ENCODE measurements at regions of chr16 and their contacts with region 1.

Region 1: GRCh38 chr16:27235055-27235937 is 32.0 kb downstream of the KDM8 start:
- DNase-seq: peak; percentile 40 to 68
- ATAC-seq: peak; percentile 82 to 91; a peak in 5 of 6 replicates
- H3K4me3 ChIP-seq: no peak overlapping the region
- H3K27ac ChIP-seq: peak overlapping the region; percentile 3 to 61; a peak in 3 of 6 replicates
- H3K4me1 ChIP-seq: peaks cover 11% of the 10 kb centered on the region
- CTCF ChIP-seq: peak; percentile 87
- EP300 ChIP-seq: no peak
- POLR2A ChIP-seq: no peak
- RAD21 ChIP-seq: peak; percentile 85 to 88

Region 2: DNA sequence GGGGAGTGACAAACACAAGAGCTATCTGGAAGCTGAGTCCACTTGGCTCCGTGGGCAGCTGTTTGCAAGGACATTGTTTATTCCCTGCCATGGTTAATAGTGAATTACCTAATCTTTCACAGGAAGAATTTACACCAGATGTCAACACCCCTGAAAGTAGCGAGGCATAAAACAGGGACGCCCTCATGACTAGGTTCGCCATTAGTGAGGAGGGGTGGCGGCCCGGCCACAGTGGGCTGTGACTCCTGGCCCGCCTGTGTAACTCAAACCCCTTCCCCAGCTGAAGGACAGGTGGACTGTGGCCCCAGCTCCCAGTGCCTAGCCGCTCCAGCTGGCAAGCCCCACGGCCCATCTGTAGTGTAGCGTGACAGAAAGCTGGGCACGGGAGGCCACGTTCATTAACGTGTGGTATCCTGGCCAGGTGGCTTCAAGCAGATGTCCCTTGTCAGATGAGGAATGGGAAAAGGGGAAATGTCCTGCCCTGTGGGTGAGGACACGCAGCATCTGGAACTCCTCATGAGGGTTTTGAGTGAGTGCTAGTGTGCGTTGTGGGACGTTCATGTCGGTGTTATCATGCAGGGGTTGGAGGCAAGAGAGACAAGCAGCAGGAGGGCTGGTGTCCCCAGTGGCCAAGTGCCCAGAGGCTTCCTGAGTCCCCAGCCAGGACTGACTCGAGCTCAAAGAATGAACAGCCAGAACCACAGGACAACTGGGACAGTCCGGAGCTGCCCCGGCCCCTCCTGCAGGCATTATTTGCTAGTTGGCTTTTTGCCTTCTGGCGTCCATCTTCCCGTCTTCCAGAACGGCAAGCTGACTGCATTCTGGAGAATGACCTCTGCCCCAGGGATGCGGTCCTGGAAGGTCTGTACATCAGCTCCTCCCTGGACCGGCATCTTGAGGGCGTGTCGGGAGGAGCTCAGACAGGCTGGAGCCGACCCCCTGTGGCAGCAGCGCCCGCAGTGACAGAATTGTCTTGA is 12.8 kb before region 1 on chr16:
- CTCF ChIA-PET with region 1: interaction called, 72 read pairs
- POLR2A ChIA-PET with region 1: no interaction called
- DNase-seq: no peak
- ATAC-seq: peak in 1 of 2 experiments; percentile 24; a peak in 3 of 6 replicates
- H3K4me3 ChIP-seq: no peak overlapping the region
- H3K27ac ChIP-seq: no peak overlapping the region
- H3K4me1 ChIP-seq: peaks cover 6% of the 10 kb centered on the region; the same call in 2 of the 3 replicates
- CTCF ChIP-seq: no peak
- EP300 ChIP-seq: no peak
- POLR2A ChIP-seq: no peak
- RAD21 ChIP-seq: no peak

Region 3: DNA sequence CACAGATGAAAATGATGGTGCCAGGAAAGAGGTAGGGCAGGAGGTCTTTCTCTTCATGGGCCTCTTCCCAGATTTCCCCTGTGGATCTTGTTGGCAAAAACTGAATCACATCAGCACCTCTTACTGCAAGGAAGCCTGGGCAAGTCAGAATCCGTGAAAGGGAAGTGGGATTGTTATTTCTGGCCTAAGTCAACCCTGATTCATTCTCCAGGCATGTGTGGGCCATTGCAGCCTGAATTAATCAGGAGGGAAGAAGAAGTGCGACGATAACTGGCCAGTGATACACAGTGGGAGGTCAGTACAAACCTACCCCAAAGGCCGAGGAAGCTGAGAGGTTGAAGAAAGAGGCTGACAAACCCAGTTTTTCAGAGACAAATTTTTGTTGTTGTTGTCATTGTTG is 51.2 kb after region 1 on chr16:
- CTCF ChIA-PET with region 1: interaction called, 23 read pairs
- POLR2A ChIA-PET with region 1: no interaction called
- DNase-seq: peak; percentile 55 to 73
- ATAC-seq: peak; percentile 70 to 94; a peak in 5 of 6 replicates
- H3K4me3 ChIP-seq: no peak overlapping the region
- H3K27ac ChIP-seq: peak overlapping the region; percentile 47 to 70; a peak in 5 of 6 replicates
- H3K4me1 ChIP-seq: peaks cover 15% of the 10 kb centered on the region
- CTCF ChIP-seq: no peak
- EP300 ChIP-seq: no peak
- POLR2A ChIP-seq: no peak
- RAD21 ChIP-seq: no peak

Region 4: GRCh38 chr16:27321011-27321915 is 86.0 kb after region 1 on chr16:
- CTCF ChIA-PET with region 1: interaction called, 25 read pairs
- POLR2A ChIA-PET with region 1: interaction called, 3 read pairs
- DNase-seq: no peak
- ATAC-seq: peak in 1 of 2 experiments; percentile 11; a peak in 1 of 6 replicates
- H3K4me3 ChIP-seq: no peak overlapping the region
- H3K27ac ChIP-seq: peak overlapping the region in 1 of 2 experiments; percentile 56; a peak in 3 of 6 replicates
- H3K4me1 ChIP-seq: peaks cover 36% of the 10 kb centered on the region
- CTCF ChIP-seq: no peak
- EP300 ChIP-seq: no peak
- POLR2A ChIP-seq: no peak
- RAD21 ChIP-seq: no peak

Region 5: DNA sequence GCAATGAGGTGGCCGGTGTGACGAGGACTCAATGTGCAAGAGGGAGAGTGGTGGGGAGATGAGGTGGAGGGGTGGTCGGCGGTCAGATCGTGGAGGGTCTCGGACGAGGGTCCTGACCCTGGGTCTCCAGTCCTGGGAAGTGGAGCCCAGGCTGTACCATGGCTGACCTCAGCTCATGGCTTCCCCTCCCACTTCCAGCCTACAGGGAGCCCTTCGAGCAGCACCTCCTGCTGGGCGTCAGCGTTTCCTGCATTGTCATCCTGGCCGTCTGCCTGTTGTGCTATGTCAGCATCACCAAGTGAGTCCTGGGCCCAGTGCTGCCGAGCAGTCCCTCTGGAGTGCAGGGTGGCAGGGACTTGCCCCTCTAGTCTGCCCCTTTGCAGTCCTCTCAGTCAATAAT is 120.3 kb after region 1 on chr16:
- CTCF ChIA-PET with region 1: interaction called, 36 read pairs
- POLR2A ChIA-PET with region 1: no interaction called
- DNase-seq: peak in 1 of 2 experiments; percentile 64
- ATAC-seq: peak; percentile 62 to 87; a peak in 5 of 6 replicates
- H3K4me3 ChIP-seq: no peak overlapping the region
- H3K27ac ChIP-seq: no peak overlapping the region
- H3K4me1 ChIP-seq: no peaks in the 10 kb centered on the region
- CTCF ChIP-seq: peak; percentile 21; the same call in 2 of the 3 replicates
- EP300 ChIP-seq: no peak
- POLR2A ChIP-seq: no peak
- RAD21 ChIP-seq: peak; percentile 14 to 23; a peak in 1 of 5 replicates

Measured in A549 (cell line).